ENCODE measurements at regions of chr18 and their contacts with region 1.

Region 1: GRCh38 chr18:37537868-37538525 is 27.6 kb downstream of the CELF4 start:
- DNase-seq: peak; percentile 45 to 94 (median 80)
- ATAC-seq: peak; percentile 82 to 97 (median 92)
- H3K4me3 ChIP-seq: no peak overlapping the region
- H3K27ac ChIP-seq: no peak overlapping the region
- H3K4me1 ChIP-seq: no peaks in the 10 kb centered on the region
- H3K27me3 ChIP-seq: peaks cover 0 to 10% (median 0%) of the 10 kb centered on the region in 4 donors
- CTCF ChIP-seq: peak; percentile 77 to 88 (median 86)

Region 2: GRCh38 chr18:37270038-37270665 is 267.8 kb before region 1 on chr18:
- intact Hi-C with region 1: no loop called
- DNase-seq: peak in 4 of 6 donors; percentile 16 to 59 (median 45)
- ATAC-seq: peak; percentile 68 to 97 (median 83)
- H3K4me3 ChIP-seq: no peak overlapping the region
- H3K27ac ChIP-seq: no peak overlapping the region
- H3K4me1 ChIP-seq: no peaks in the 10 kb centered on the region
- H3K27me3 ChIP-seq: peaks cover 0 to 5% (median 0%) of the 10 kb centered on the region in 4 donors
- CTCF ChIP-seq: no peak

Region 3: GRCh38 chr18:37346048-37346447 is 191.9 kb before region 1 on chr18:
- intact Hi-C with region 1: loop called in 2 of 3 experiments (anchors 10 kb)
- DNase-seq: no peak
- ATAC-seq: no peak
- H3K4me3 ChIP-seq: no peak overlapping the region
- H3K27ac ChIP-seq: no peak overlapping the region
- H3K4me1 ChIP-seq: no peaks in the 10 kb centered on the region
- H3K27me3 ChIP-seq: no peaks in the 10 kb centered on the region
- CTCF ChIP-seq: no peak

Region 4: GRCh38 chr18:37450434-37451132 is 87.4 kb before region 1 on chr18:
- intact Hi-C with region 1: loop called in 1 of 3 experiments (anchors 10 kb)
- DNase-seq: peak in 1 of 6 donors; percentile 24
- ATAC-seq: peak in 2 of 4 donors; percentile 57 to 73
- H3K4me3 ChIP-seq: no peak overlapping the region
- H3K27ac ChIP-seq: no peak overlapping the region
- H3K4me1 ChIP-seq: no peaks in the 10 kb centered on the region
- H3K27me3 ChIP-seq: no peaks in the 10 kb centered on the region
- CTCF ChIP-seq: no peak